Uterus (tissue), 4 donors: ENCODE measurements at regions of chr5 and their contacts with region 1.

Region 1: DNA sequence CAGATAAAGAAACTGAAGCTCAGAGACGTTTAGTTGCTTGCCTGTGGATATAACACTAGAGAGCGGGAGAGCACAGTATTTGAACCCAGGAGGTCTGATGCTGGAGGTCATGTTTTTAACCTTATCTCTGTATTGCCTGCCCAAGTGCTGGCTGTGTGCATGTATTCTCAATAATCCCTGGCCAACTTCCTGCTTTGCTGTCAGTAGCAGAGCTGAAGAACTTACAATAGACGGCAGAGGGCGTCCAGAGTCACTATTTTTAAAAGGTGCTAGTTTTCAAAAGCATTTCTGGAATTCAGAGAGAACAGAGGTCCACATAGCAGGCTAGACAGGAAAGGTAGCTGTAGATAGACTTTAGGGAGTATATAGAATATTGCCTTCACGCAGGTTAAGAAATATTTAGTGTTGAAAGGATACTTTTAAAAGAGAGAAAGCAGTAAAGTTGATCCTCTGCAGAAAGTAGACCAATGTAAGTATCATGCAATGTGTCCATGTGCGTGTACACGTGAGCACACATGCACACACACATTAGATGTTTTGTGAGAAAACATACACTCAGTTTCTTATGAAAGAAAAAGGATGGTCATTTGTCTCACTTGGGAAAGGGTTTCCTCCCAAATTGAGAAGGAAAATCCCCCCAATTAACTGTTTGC is 46.3 kb downstream of the PTCD2 start:
- DNase-seq: peak; percentile 69 to 81
- H3K4me3 ChIP-seq: no peak overlapping the region
- H3K27ac ChIP-seq: peak overlapping the region in 1 of 2 donors; percentile 59
- H3K4me1 ChIP-seq: peaks cover 0 to 6% of the 10 kb centered on the region in 2 donors
- H3K27me3 ChIP-seq: no peaks in the 10 kb centered on the region
- CTCF ChIP-seq: peak; percentile 81 to 86 (median 83)
- POLR2A ChIP-seq: no peak

Region 2: GRCh38 chr5:72523960-72524582 is 157.6 kb after region 1 on chr5:
- intact Hi-C with region 1: loop called (anchors 10 kb)
- DNase-seq: no peak
- H3K4me3 ChIP-seq: no peak overlapping the region
- H3K27ac ChIP-seq: no peak overlapping the region
- H3K4me1 ChIP-seq: no peaks in the 10 kb centered on the region
- H3K27me3 ChIP-seq: no peaks in the 10 kb centered on the region
- CTCF ChIP-seq: peak; percentile 47 to 73 (median 56)
- POLR2A ChIP-seq: no peak